Endothelial cell of umbilical vein (primary cell): ENCODE measurements at regions of chr17 and their contacts with region 1.

Region 1: GRCh38 chr17:76384222-76384986 is at the start of gene SPHK1:
- DNase-seq: peak; percentile 71
- H3K4me3 ChIP-seq: peak within 1 kb of the TSS; percentile 54 to 82 (median 65)
- H3K27ac ChIP-seq: peak within 1 kb of the TSS; percentile 97
- H3K4me1 ChIP-seq: peaks cover 26% of the 10 kb centered on the region
- H3K27me3 ChIP-seq: no peaks in the 10 kb centered on the region
- CTCF ChIP-seq: no peak
- POLR2A ChIP-seq: peak; percentile 93
- total RNA-seq, gene SPHK1: 70.7 and 85.6 TPM in 2 replicates

Region 2: GRCh38 chr17:76296186-76296585 is 88.2 kb before region 1 on chr17:
- CTCF ChIA-PET with region 1: interaction called, 17 read pairs
- POLR2A ChIA-PET with region 1: no interaction called
- dilution Hi-C with region 1: no loop called
- intact Hi-C with region 1: no loop called
- DNase-seq: no peak
- H3K4me3 ChIP-seq: no peak overlapping the region
- H3K27ac ChIP-seq: no peak overlapping the region
- H3K4me1 ChIP-seq: peaks cover 4% of the 10 kb centered on the region
- H3K27me3 ChIP-seq: no peaks in the 10 kb centered on the region
- CTCF ChIP-seq: no peak
- POLR2A ChIP-seq: no peak

Region 3: GRCh38 chr17:76314392-76315227 is 69.8 kb before region 1 on chr17:
- CTCF ChIA-PET with region 1: interaction called, 10 read pairs
- POLR2A ChIA-PET with region 1: interaction called, 8 read pairs
- dilution Hi-C with region 1: no loop called
- intact Hi-C with region 1: loop called (anchors 2 kb)
- DNase-seq: peak; percentile 88
- H3K4me3 ChIP-seq: peak overlapping the region in 1 of 3 experiments; percentile 23
- H3K27ac ChIP-seq: peak overlapping the region; percentile 71
- H3K4me1 ChIP-seq: peaks cover 30% of the 10 kb centered on the region
- H3K27me3 ChIP-seq: no peaks in the 10 kb centered on the region
- CTCF ChIP-seq: no peak
- POLR2A ChIP-seq: no peak

Region 4: GRCh38 chr17:76353599-76354316 is 30.6 kb before region 1 on chr17 and contains the start of gene PRPSAP1:
- CTCF ChIA-PET with region 1: interaction called, 57 read pairs
- POLR2A ChIA-PET with region 1: interaction called, 10 read pairs
- dilution Hi-C with region 1: no loop called
- intact Hi-C with region 1: loop called (anchors 1 kb)
- DNase-seq: peak; percentile 94
- H3K4me3 ChIP-seq: peak within 1 kb of the TSS; percentile 50 to 94 (median 56)
- H3K27ac ChIP-seq: peak within 1 kb of the TSS; percentile 98
- H3K4me1 ChIP-seq: peaks cover 10% of the 10 kb centered on the region
- H3K27me3 ChIP-seq: no peaks in the 10 kb centered on the region
- CTCF ChIP-seq: peak in 1 of 2 donors; percentile 52
- POLR2A ChIP-seq: peak; percentile 96
- total RNA-seq, gene PRPSAP1: 79.1 and 90.2 TPM in 2 replicates

Region 5: GRCh38 chr17:76370261-76370993 is 14.0 kb before region 1 on chr17:
- CTCF ChIA-PET with region 1: interaction called, 106 read pairs
- POLR2A ChIA-PET with region 1: interaction called, 13 read pairs
- dilution Hi-C with region 1: no loop called
- intact Hi-C with region 1: loop called (anchors 1 kb)
- DNase-seq: peak; percentile 92
- H3K4me3 ChIP-seq: no peak overlapping the region
- H3K27ac ChIP-seq: peak overlapping the region; percentile 97
- H3K4me1 ChIP-seq: peaks cover 28% of the 10 kb centered on the region
- H3K27me3 ChIP-seq: no peaks in the 10 kb centered on the region
- CTCF ChIP-seq: peak; percentile 56 to 62
- POLR2A ChIP-seq: no peak